Vagina (tissue), 2 donors: ENCODE measurements at regions of chr9 and their contacts with region 1.

Region 1: GRCh38 chr9:98271479-98271878 is 16.0 kb upstream of the TBC1D2 start:
- DNase-seq: no peak
- H3K4me3 ChIP-seq: no peak overlapping the region
- H3K27ac ChIP-seq: no peak overlapping the region
- H3K4me1 ChIP-seq: no peaks in the 10 kb centered on the region
- H3K27me3 ChIP-seq: no peaks in the 10 kb centered on the region
- CTCF ChIP-seq: no peak
- POLR2A ChIP-seq: no peak

Region 2: DNA sequence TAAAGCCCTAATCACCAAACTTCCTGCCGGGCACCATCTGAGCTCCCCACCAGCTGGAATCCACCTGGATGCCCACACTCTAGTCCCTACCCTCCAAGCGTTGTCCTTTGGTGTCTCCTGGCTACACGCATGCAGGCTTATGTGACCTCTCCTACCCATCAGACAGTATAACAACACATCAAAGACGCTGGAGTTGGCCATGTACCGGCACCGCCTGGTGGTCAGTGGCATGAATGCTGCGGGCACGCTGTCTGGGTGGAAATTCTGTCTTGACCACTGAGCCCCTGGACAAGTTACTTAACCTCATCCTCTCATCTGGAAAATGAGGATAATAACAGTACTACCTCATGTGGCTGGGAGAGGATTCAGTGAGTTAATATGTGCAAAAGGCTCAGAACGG is 55.7 kb before region 1 on chr9:
- intact Hi-C with region 1: loop called (anchors 10 kb)
- DNase-seq: no peak
- H3K4me3 ChIP-seq: no peak overlapping the region
- H3K27ac ChIP-seq: no peak overlapping the region
- H3K4me1 ChIP-seq: peaks cover 4% of the 10 kb centered on the region
- H3K27me3 ChIP-seq: no peaks in the 10 kb centered on the region
- CTCF ChIP-seq: no peak
- POLR2A ChIP-seq: no peak